Ascending aorta (tissue), 2 donors: ENCODE measurements at regions of chr4 and their contacts with region 1.

Region 1: DNA sequence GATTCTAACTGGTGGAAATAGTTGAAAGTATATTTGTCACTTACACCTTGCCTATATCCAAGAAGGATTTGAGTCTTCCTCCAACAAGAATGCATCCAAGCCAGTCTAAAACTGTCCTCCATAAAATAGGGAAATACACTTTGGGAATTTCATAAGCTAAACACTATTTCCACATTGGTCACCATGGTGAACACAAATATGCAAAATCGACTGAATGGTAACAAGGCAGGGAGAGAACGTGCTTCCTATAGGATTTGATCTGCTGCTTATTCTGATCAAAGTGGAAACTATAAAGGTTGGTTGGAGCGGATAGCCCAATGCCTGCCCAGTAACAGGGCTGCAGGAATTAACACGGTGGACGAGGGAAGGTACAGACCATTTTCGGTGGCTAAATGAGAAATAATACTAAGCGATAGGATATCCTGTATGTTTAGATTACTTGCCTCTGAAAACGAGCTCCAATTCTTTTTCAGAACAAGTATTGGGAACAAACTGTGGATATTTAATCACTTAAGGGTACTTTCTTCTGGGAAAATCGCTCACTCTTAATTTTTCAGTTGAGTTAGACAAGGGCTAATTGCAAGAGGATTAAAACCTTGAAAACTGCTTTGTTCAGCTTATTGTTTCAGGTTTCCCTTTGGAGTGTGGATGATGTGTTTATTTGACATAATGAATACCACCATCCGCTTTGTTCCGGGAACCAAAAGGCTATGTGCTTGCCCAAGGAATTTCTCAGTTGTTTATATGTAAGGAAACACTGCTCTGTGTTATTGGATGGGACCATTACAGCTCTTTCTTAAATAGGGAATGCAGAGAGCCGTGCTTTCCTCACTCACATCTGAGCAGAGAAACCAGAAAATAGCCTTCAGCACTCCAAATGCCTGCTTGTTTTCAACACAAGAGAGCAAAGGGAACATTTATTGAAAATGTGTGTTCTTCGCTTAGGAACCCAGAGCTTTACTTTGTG is 194.4 kb downstream of the CBR4 start:
- DNase-seq: no peak
- H3K4me3 ChIP-seq: peak overlapping the region in 1 of 2 donors; percentile 43
- H3K27ac ChIP-seq: peak overlapping the region; percentile 78 to 84
- H3K4me1 ChIP-seq: peaks cover 5 to 33% of the 10 kb centered on the region in 2 donors
- H3K27me3 ChIP-seq: no peaks in the 10 kb centered on the region
- CTCF ChIP-seq: no peak

Region 2: GRCh38 chr4:168793542-168793941 is 22.1 kb before region 1 on chr4:
- intact Hi-C with region 1: loop called (anchors 2 kb)
- DNase-seq: no peak
- H3K4me3 ChIP-seq: no peak overlapping the region
- H3K27ac ChIP-seq: no peak overlapping the region
- H3K4me1 ChIP-seq: peaks cover 0 to 7% of the 10 kb centered on the region in 2 donors
- H3K27me3 ChIP-seq: no peaks in the 10 kb centered on the region
- CTCF ChIP-seq: no peak

Region 3: DNA sequence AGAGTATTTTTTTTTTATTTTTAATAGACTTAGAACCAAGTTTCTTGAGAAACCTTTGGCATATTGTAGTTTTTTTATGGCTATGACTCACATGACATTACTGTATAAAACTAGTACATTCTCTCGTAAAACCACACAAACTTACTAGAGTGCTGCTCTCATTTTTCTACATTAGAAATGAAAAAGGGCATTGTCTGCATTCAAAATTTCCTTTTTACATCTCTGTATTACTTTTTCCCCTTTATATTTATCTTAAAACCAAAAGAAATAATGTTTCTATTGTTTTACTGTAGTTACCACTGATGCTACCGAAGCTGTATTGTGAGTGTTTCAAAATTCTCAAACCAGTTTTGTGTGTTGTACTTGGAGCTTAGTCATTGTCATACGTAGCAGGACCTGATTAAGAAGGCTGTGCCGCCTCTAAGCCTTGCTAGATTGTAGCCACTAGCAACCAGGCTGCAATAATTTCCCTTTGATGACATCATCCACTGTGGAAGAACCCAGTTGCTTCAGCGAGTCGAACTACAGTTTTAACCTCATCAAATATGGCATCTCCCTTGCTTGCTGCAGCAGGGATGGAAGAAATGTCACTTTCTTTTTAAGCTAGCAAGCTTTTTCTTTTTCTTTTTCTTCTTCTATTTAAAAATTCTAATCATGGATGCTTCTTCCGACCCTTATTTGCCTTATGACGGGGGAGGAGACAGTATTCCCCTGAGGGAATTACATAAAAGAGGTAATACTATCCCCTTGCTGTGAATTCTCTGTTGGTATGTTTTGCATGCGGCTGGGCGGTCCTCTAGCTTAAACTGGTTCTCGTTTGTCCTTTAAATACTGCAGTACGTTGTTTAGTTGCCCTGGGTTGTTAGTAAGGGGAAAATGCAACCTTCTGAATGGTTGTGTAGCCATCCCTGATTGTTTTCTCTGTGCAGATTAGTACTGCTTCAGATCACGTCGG is 844.3 kb after region 1 on chr4:
- intact Hi-C with region 1: no loop called
- DNase-seq: peak; percentile 51 to 93
- H3K4me3 ChIP-seq: peak overlapping the region; percentile 42 to 61
- H3K27ac ChIP-seq: peak overlapping the region; percentile 37 to 71
- H3K4me1 ChIP-seq: peaks cover 0 to 7% of the 10 kb centered on the region in 2 donors
- H3K27me3 ChIP-seq: no peaks in the 10 kb centered on the region
- CTCF ChIP-seq: no peak